Heart right ventricle (tissue), 16 donors: ENCODE measurements at regions of chr12 and their contacts with region 1.

Region 1: DNA sequence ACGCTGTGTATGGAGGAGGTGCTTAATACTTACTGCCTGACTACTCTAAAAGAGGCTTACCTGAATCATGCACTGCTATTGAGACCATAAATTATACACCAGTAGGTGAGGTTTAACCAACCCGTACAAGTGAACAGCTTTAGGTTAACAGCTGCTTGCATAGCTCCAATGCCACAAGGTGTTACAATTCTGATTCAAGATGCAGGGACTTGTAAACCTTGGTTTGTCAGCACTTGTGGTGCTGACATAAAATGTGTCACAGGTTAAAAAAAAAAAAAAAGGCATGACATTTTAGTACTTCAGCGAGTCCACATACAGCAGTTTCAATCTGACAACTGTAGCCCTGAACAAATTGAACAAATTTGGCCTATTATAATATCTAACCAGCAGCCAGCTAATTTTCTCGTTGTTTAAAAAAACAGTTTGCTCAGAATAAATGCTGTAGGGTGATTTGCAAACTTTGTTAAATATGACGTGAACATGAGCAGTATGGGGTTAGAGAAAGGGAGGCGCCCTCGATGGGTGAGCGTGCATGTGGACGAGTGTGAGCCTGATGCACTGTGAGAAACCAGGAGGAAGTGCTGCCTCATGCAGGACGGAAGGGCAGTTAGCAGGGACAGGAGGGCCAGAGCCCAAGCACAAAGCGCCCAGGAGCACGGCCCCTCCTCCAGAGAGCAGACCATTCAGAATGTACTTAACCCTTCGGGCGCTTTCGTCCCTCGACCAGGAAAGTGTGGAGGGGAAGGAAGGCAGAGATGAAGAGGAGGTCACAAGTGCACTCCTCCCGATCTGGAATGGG is 44.7 kb downstream of the TCHP start:
- DNase-seq: peak; percentile 30 to 31
- ATAC-seq: peak; percentile 52 to 82 (median 72)
- H3K4me3 ChIP-seq: no peak overlapping the region
- H3K27ac ChIP-seq: peak overlapping the region in 7 of 10 donors; percentile 8 to 77 (median 48)
- H3K4me1 ChIP-seq: peaks cover 1 to 60% (median 54%) of the 10 kb centered on the region in 9 donors
- H3K27me3 ChIP-seq: no peaks in the 10 kb centered on the region
- CTCF ChIP-seq: peak in 4 of 9 donors; percentile 9 to 33 (median 26)

Region 2: GRCh38 chr12:109995686-109996482 is 51.1 kb after region 1 on chr12 and contains the start of gene GIT2:
- intact Hi-C with region 1: loop called in 1 of 10 experiments (anchors 10 kb)
- DNase-seq: peak; percentile 93
- ATAC-seq: peak; percentile 88 to 92 (median 91)
- H3K4me3 ChIP-seq: peak within 1 kb of the TSS; percentile 74 to 99 (median 96)
- H3K27ac ChIP-seq: peak within 1 kb of the TSS; percentile 83 to 98 (median 93)
- H3K4me1 ChIP-seq: peaks cover 0 to 67% (median 46%) of the 10 kb centered on the region in 9 donors
- H3K27me3 ChIP-seq: no peaks in the 10 kb centered on the region
- CTCF ChIP-seq: peak in 1 of 9 donors; percentile 17
- total RNA-seq, gene GIT2: 31.7 to 44.9 (median 40.1) TPM